GM12878 (cell line): ENCODE measurements at regions of chr6 and their contacts with region 1.

Region 1: DNA sequence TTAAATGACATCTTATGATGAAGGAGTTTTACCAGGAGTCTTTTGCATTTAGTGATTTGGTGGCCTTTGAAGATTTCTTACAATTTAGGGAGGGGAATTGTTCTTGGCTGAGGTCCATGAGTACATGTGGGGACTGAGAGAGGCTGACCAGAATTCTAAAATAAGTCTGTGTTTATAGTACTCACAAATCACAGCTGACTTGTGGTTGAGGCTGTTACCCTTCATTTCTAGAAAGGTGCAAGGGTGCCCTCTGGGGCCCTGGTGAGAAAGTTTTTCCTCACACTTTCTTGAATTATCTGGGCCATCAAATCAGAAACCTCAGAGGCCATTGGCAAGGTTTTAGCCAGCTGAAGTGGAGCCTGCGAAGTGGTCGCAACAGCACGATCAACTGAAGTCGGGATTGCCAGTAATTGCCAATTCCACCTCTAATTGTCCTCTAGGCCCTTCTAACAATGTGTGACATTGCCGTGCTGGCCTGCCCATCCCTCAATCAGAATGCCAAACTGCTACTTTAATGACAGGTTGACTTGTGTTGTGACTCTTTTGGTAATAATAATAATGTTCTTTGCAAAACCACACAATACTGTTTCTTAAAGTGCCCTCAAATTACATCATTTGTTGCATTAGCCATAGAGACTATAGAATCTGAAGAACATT is 221.6 kb downstream of the OGFRL1 start:
- DNase-seq: no peak
- ATAC-seq: peak; percentile 77
- H3K4me3 ChIP-seq: no peak overlapping the region
- H3K27ac ChIP-seq: no peak overlapping the region
- H3K4me1 ChIP-seq: no peaks in the 10 kb centered on the region
- H3K27me3 ChIP-seq: no peaks in the 10 kb centered on the region
- CTCF ChIP-seq: peak; percentile 40 to 70 (median 45); a peak in 5 of 6 replicates
- EP300 ChIP-seq: no peak
- POLR2A ChIP-seq: no peak
- RAD21 ChIP-seq: peak; percentile 73

Region 2: GRCh38 chr6:71181565-71181964 is 328.6 kb before region 1 on chr6:
- CTCF ChIA-PET with region 1: no interaction called
- POLR2A ChIA-PET with region 1: no interaction called
- RAD21 ChIA-PET with region 1: no interaction called
- SMC1A ChIA-PET with region 1: no interaction called
- in situ Hi-C with region 1: no loop called
- intact Hi-C with region 1: loop called (anchors 10 kb)
- DNase-seq: no peak
- ATAC-seq: no peak
- H3K4me3 ChIP-seq: no peak overlapping the region
- H3K27ac ChIP-seq: no peak overlapping the region
- H3K4me1 ChIP-seq: no peaks in the 10 kb centered on the region
- H3K27me3 ChIP-seq: peaks cover 0 to 4% of the 10 kb centered on the region in 2 experiments; a peak in 2 of 4 replicates
- CTCF ChIP-seq: no peak
- EP300 ChIP-seq: no peak
- POLR2A ChIP-seq: no peak
- RAD21 ChIP-seq: no peak

Region 3: GRCh38 chr6:71383901-71384489 is 126.2 kb before region 1 on chr6:
- CTCF ChIA-PET with region 1: interaction called, 17 read pairs
- POLR2A ChIA-PET with region 1: no interaction called
- RAD21 ChIA-PET with region 1: interaction called, 3 read pairs
- SMC1A ChIA-PET with region 1: interaction called, 9 read pairs
- in situ Hi-C with region 1: loop called (anchors 5 kb)
- intact Hi-C with region 1: loop called (anchors 1 kb)
- DNase-seq: no peak
- ATAC-seq: no peak
- H3K4me3 ChIP-seq: no peak overlapping the region
- H3K27ac ChIP-seq: no peak overlapping the region
- H3K4me1 ChIP-seq: no peaks in the 10 kb centered on the region
- H3K27me3 ChIP-seq: no peaks in the 10 kb centered on the region
- CTCF ChIP-seq: peak; percentile 29 to 59 (median 38); a peak in 5 of 6 replicates
- EP300 ChIP-seq: no peak
- POLR2A ChIP-seq: no peak
- RAD21 ChIP-seq: peak; percentile 81

Region 4: GRCh38 chr6:71544028-71544427 is 33.8 kb after region 1 on chr6:
- CTCF ChIA-PET with region 1: no interaction called
- POLR2A ChIA-PET with region 1: no interaction called
- RAD21 ChIA-PET with region 1: no interaction called
- SMC1A ChIA-PET with region 1: no interaction called
- in situ Hi-C with region 1: no loop called
- intact Hi-C with region 1: no loop called
- DNase-seq: no peak
- ATAC-seq: no peak
- H3K4me3 ChIP-seq: no peak overlapping the region
- H3K27ac ChIP-seq: no peak overlapping the region
- H3K4me1 ChIP-seq: no peaks in the 10 kb centered on the region
- H3K27me3 ChIP-seq: no peaks in the 10 kb centered on the region
- CTCF ChIP-seq: no peak
- EP300 ChIP-seq: no peak
- POLR2A ChIP-seq: no peak
- RAD21 ChIP-seq: no peak